Esophagus muscularis mucosa (tissue), 4 donors: ENCODE measurements at regions of chrX and their contacts with region 1.

Region 1: GRCh38 chrX:153554519-153555167 is 37.2 kb downstream of the ATP2B3 start:
- DNase-seq: peak; percentile 92
- H3K4me3 ChIP-seq: no peak overlapping the region
- H3K27ac ChIP-seq: no peak overlapping the region
- H3K4me1 ChIP-seq: peaks cover 0 to 9% (median 2%) of the 10 kb centered on the region in 4 donors
- H3K27me3 ChIP-seq: no peaks in the 10 kb centered on the region
- CTCF ChIP-seq: peak; percentile 47 to 67 (median 48)
- EP300 ChIP-seq: no peak
- POLR2A ChIP-seq: no peak

Region 2: GRCh38 chrX:152936357-152936756 is 618.3 kb before region 1 on chrX:
- intact Hi-C with region 1: no loop called
- DNase-seq: no peak
- H3K4me3 ChIP-seq: no peak overlapping the region
- H3K27ac ChIP-seq: no peak overlapping the region
- H3K4me1 ChIP-seq: peaks cover 0 to 4% (median 2%) of the 10 kb centered on the region in 4 donors
- H3K27me3 ChIP-seq: no peaks in the 10 kb centered on the region
- CTCF ChIP-seq: no peak
- EP300 ChIP-seq: no peak
- POLR2A ChIP-seq: no peak

Region 3: DNA sequence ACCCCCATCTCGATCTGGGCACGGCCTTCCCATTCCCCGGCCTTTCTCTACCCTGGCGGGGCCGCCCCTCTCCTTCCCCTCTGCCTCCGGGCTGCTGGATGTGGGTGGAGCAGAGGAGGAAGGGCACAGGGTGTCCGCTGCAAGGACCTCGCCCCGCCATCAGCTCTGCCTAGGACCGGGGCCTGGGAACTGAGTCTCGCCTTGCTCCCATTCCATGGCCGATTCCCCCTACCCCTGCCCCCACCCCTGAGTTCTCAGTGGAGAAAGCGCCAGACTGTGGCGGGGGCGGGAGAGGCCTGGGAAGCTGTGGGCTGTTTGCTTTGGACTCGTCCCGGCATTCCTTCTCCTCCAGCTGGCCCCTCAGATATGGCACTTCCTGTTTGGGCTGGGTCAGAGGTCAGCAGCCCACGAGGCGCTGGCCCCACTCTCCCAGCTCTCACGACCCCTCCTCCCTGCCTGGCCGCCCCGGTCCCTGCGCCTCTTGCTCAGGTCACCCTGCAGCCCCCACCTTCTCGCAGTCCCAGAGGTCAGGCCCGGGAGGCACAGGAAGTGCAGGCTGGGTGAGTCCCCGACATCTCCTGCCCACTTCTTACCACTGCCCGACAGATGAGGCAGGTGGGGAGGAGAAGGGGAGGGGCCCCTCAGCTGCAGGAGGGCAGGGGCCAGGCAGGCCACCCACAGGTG is 66.3 kb before region 1 on chrX:
- intact Hi-C with region 1: no loop called
- DNase-seq: no peak
- H3K4me3 ChIP-seq: no peak overlapping the region
- H3K27ac ChIP-seq: peak overlapping the region in 3 of 4 donors; percentile 11 to 42 (median 23)
- H3K4me1 ChIP-seq: peaks cover 2 to 22% (median 18%) of the 10 kb centered on the region in 4 donors
- H3K27me3 ChIP-seq: peaks cover 0 to 3% (median 0%) of the 10 kb centered on the region in 4 donors
- CTCF ChIP-seq: no peak
- EP300 ChIP-seq: no peak
- POLR2A ChIP-seq: no peak

Region 4: GRCh38 chrX:153662266-153662665 is 107.6 kb after region 1 on chrX:
- intact Hi-C with region 1: loop called (anchors 5 kb)
- DNase-seq: no peak
- H3K4me3 ChIP-seq: peak overlapping the region in 2 of 4 donors; percentile 14 to 33
- H3K27ac ChIP-seq: no peak overlapping the region
- H3K4me1 ChIP-seq: peaks cover 0 to 3% (median 1%) of the 10 kb centered on the region in 4 donors
- H3K27me3 ChIP-seq: peaks cover 0 to 24% (median 6%) of the 10 kb centered on the region in 4 donors
- CTCF ChIP-seq: peak; percentile 24 to 45 (median 34)
- EP300 ChIP-seq: no peak
- POLR2A ChIP-seq: no peak